H1 (cell line): ENCODE measurements at regions of chr3 and their contacts with region 1.

Region 1: GRCh38 chr3:56801662-56802377 is at the start of gene ARHGEF3:
- DNase-seq: peak; percentile 49 to 93
- H3K4me3 ChIP-seq: peak within 1 kb of the TSS; percentile 31 to 79 (median 76)
- H3K27ac ChIP-seq: no peak within 1 kb of the TSS
- H3K4me1 ChIP-seq: peaks cover 0 to 9% (median 3%) of the 10 kb centered on the region in 4 experiments; a peak in 4 of 7 replicates
- H3K27me3 ChIP-seq: peaks cover 0 to 11% (median 7%) of the 10 kb centered on the region in 4 experiments; a peak in 3 of 7 replicates
- CTCF ChIP-seq: peak; percentile 61 to 70 (median 66)
- EP300 ChIP-seq: no peak
- POLR2A ChIP-seq: peak; percentile 66 to 72
- RAD21 ChIP-seq: peak; percentile 52 to 74
- total RNA-seq, gene ARHGEF3: 6.0 and 7.7 TPM in 2 replicates

Region 2: DNA sequence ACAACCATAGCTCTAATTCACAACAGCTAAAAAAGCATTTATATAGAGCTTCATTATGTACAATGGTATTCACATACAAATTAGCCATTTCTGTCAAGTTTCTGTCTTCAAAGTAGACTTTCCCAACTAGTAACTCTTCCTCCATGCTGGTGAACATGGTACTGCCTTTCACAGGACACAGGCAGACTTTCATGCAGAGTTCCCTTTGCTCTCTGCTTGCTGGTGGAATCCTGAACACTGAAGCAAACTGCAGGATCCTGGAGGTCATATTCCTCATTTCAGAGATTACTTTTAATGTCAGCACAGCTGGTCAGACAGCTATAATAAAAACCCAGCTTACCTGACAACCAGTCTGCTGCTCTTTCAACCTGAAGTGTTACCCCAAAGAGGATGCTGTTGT is 172.4 kb before region 1 on chr3:
- CTCF ChIA-PET with region 1: no interaction called
- POLR2A ChIA-PET with region 1: no interaction called
- DNase-seq: no peak
- H3K4me3 ChIP-seq: no peak overlapping the region
- H3K27ac ChIP-seq: no peak overlapping the region
- H3K4me1 ChIP-seq: no peaks in the 10 kb centered on the region
- H3K27me3 ChIP-seq: no peaks in the 10 kb centered on the region
- CTCF ChIP-seq: no peak
- EP300 ChIP-seq: no peak
- POLR2A ChIP-seq: no peak
- RAD21 ChIP-seq: no peak

Region 3: GRCh38 chr3:56764904-56765547 is 36.8 kb before region 1 on chr3:
- CTCF ChIA-PET with region 1: interaction called, 11 read pairs
- POLR2A ChIA-PET with region 1: no interaction called
- DNase-seq: no peak
- H3K4me3 ChIP-seq: no peak overlapping the region
- H3K27ac ChIP-seq: no peak overlapping the region
- H3K4me1 ChIP-seq: peaks cover 0 to 3% (median 0%) of the 10 kb centered on the region in 4 experiments; a peak in 1 of 7 replicates
- H3K27me3 ChIP-seq: no peaks in the 10 kb centered on the region
- CTCF ChIP-seq: no peak
- EP300 ChIP-seq: no peak
- POLR2A ChIP-seq: no peak
- RAD21 ChIP-seq: no peak

Region 4: DNA sequence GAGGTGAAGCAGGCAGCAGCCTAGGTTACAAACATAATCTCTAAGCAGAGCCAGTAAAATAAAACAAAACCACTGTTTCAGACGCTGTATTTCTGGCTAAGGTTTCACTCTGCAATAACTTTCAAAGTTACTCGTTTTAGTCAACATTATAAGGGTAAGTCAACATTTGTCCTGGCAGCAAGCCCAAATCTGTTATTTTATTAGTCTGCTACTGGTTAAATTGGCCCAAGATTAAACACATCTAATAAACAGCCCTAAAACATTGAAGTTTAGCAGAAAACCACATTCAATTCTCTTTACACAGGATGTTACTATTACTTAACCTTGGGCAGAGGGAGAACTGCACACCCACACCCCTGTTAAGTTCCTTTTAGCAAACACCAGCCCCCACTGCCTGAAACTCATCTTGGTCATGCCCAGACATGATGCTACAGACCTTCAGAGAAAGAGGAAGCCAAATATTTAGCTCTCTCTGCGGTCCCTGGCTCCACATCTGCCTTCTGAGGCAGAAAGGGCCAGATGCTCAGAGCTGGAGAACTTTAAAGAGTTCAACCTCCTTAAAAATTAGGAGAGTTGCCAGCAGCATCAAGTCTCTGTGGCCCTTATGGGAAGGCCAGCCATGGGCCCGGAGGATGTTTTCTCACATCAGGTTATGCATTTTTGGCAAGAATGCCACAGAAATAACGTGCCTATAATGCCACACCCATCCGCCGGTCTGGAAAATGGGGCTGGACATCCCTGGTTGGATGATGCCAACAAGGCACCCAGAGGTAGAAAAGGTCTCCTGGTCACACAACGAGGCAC is 18.0 kb before region 1 on chr3:
- CTCF ChIA-PET with region 1: interaction called, 45 read pairs
- POLR2A ChIA-PET with region 1: no interaction called
- DNase-seq: no peak
- H3K4me3 ChIP-seq: no peak overlapping the region
- H3K27ac ChIP-seq: no peak overlapping the region
- H3K4me1 ChIP-seq: no peaks in the 10 kb centered on the region; a peak in 1 of 7 replicates
- H3K27me3 ChIP-seq: no peaks in the 10 kb centered on the region
- CTCF ChIP-seq: no peak
- EP300 ChIP-seq: no peak
- POLR2A ChIP-seq: no peak
- RAD21 ChIP-seq: no peak

Region 5: DNA sequence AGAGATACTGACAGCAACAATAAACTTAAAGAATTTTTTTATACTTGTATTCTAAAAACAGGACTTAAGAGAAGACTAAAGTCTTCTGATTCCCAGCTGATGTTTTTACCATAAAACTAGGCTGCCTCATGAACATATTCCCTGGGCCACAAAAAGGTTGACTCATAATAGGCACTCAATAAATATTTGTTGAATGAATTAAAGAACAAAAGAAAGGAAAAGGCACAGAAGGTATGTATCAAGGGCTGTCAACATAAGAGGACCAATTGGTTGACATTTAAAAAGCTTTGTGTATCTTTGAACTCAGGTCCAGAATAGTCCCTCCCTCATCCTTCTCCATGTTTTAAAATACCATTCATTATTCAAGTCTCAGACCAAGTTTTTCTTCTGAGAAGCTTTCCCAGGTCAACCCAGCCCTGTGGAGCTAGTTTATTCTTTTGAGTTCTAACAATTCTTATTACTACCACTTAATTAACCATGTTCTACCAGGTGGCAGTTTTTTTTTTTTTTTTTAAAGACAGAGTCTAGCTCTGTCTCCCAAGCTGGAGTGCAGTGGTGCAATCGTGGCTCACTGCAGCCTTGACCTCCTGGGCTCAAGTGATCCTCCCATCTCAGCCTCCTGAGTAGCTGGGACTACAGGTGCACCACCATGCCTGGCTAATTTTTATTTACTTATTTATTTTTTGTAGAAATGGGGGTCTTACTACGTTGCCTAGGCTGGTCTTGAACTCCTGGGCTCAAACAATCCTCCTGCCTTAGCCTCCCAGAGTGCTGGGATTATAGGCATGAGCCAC is 17.4 kb after region 1 on chr3:
- CTCF ChIA-PET with region 1: interaction called, 92 read pairs
- POLR2A ChIA-PET with region 1: interaction called, 5 read pairs
- DNase-seq: no peak
- H3K4me3 ChIP-seq: no peak overlapping the region
- H3K27ac ChIP-seq: no peak overlapping the region
- H3K4me1 ChIP-seq: peaks cover 2 to 6% (median 3%) of the 10 kb centered on the region in 4 experiments; a peak in 5 of 7 replicates
- H3K27me3 ChIP-seq: no peaks in the 10 kb centered on the region
- CTCF ChIP-seq: no peak
- EP300 ChIP-seq: no peak
- POLR2A ChIP-seq: no peak
- RAD21 ChIP-seq: no peak

Region 6: GRCh38 chr3:56869157-56869889 is 67.5 kb after region 1 on chr3:
- CTCF ChIA-PET with region 1: interaction called, 10 read pairs
- POLR2A ChIA-PET with region 1: no interaction called
- DNase-seq: no peak
- H3K4me3 ChIP-seq: no peak overlapping the region
- H3K27ac ChIP-seq: no peak overlapping the region
- H3K4me1 ChIP-seq: peaks cover 0 to 2% (median 0%) of the 10 kb centered on the region in 4 experiments; a peak in 1 of 7 replicates
- H3K27me3 ChIP-seq: no peaks in the 10 kb centered on the region
- CTCF ChIP-seq: no peak
- EP300 ChIP-seq: no peak
- POLR2A ChIP-seq: no peak
- RAD21 ChIP-seq: no peak